Pancreas (tissue), 10 donors: ENCODE measurements at regions of chr20 and their contacts with region 1.

Region 1: GRCh38 chr20:354298-355064 is 7.6 kb downstream of the NRSN2 start:
- DNase-seq: peak; percentile 61 to 87 (median 80)
- ATAC-seq: peak; percentile 92 to 100 (median 98)
- H3K4me3 ChIP-seq: no peak overlapping the region
- H3K27ac ChIP-seq: no peak overlapping the region
- H3K4me1 ChIP-seq: peaks cover 0 to under 1% (median 0%) of the 10 kb centered on the region in 3 donors
- H3K27me3 ChIP-seq: no peaks in the 10 kb centered on the region
- CTCF ChIP-seq: peak; percentile 93 to 97 (median 96)

Region 2: GRCh38 chr20:431012-431904 is 76.8 kb after region 1 on chr20:
- intact Hi-C with region 1: loop called in 2 of 3 experiments (anchors 10 kb)
- DNase-seq: peak; percentile 59 to 82 (median 71)
- ATAC-seq: peak; percentile 78 to 92 (median 89)
- H3K4me3 ChIP-seq: no peak overlapping the region
- H3K27ac ChIP-seq: no peak overlapping the region
- H3K4me1 ChIP-seq: no peaks in the 10 kb centered on the region
- H3K27me3 ChIP-seq: no peaks in the 10 kb centered on the region
- CTCF ChIP-seq: peak; percentile 39 to 48 (median 48)

Region 3: DNA sequence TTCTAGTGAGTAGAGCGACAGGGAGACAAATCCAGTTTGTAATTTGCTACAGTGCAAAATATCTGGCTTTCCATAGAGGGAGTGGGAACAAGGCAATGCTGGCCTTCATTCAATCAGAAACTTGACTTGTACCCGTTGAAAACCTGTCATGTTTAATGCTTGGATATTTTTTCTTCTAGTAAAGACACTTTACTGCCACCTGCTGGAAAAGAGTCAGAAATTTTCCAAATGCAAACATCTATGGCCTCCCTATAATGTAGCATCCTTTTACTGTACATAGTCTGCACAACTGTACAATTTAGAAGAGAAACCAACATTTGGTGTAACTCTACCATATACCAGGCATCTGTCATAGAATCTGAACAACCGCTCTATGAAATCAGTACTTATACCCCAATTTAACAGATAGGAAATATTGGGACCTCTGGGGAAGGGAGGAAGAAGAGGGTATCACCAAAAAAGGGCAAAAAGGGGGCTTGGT is 124.5 kb after region 1 on chr20:
- intact Hi-C with region 1: loop called in 2 of 3 experiments (anchors 5 to 10 kb)
- DNase-seq: peak in 1 of 6 donors; percentile 23
- ATAC-seq: peak; percentile 63 to 83 (median 74)
- H3K4me3 ChIP-seq: no peak overlapping the region
- H3K27ac ChIP-seq: no peak overlapping the region
- H3K4me1 ChIP-seq: peaks cover 0 to 4% (median 0%) of the 10 kb centered on the region in 3 donors
- H3K27me3 ChIP-seq: no peaks in the 10 kb centered on the region
- CTCF ChIP-seq: peak; percentile 13 to 53 (median 32)

Region 4: DNA sequence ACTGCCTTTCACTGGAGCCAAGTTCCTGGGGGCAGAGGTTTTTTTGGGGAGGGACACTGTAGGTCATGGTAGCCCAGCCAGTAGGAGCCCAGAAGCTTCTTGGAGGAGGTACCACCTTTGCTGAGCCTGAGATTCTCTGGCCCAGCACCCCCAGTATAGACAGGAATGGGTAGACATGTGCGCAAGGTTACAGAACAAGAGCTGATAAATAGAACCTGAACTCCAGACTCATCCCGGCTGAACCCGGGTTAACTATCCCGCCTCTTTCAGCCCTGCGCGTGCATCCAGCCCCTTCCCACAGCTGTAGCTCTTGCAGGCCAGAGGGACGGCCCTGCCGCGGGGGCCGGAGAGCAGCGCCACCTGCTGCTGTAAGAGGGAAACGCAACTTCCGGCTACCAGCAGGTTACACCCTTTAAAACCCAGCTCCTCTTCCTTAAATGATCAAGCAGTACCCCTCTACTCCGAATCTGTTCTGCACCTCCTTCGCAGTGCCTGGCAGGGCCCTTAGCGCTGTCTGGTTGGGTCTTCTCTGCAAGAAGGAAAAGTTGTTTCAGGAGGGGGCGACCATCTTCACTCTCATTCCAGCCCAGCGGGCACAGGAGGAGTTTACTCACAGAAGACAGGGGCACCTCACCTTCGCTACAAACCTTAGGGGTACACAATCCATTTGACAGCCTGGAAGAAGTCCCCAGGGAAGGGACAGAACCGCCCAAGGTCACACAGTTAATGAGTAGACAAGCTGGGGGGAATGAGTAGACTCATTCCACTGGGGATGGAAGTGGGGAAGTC is 291.0 kb after region 1 on chr20:
- intact Hi-C with region 1: loop called (anchors 10 kb)
- DNase-seq: peak; percentile 37 to 91 (median 78)
- ATAC-seq: peak; percentile 86 to 96 (median 91)
- H3K4me3 ChIP-seq: no peak overlapping the region
- H3K27ac ChIP-seq: no peak overlapping the region
- H3K4me1 ChIP-seq: peaks cover 0 to 8% (median 6%) of the 10 kb centered on the region in 3 donors
- H3K27me3 ChIP-seq: no peaks in the 10 kb centered on the region
- CTCF ChIP-seq: peak; percentile 86 to 91 (median 90)